ENCODE measurements at regions of chr16 and their contacts with region 1.

Region 1: DNA sequence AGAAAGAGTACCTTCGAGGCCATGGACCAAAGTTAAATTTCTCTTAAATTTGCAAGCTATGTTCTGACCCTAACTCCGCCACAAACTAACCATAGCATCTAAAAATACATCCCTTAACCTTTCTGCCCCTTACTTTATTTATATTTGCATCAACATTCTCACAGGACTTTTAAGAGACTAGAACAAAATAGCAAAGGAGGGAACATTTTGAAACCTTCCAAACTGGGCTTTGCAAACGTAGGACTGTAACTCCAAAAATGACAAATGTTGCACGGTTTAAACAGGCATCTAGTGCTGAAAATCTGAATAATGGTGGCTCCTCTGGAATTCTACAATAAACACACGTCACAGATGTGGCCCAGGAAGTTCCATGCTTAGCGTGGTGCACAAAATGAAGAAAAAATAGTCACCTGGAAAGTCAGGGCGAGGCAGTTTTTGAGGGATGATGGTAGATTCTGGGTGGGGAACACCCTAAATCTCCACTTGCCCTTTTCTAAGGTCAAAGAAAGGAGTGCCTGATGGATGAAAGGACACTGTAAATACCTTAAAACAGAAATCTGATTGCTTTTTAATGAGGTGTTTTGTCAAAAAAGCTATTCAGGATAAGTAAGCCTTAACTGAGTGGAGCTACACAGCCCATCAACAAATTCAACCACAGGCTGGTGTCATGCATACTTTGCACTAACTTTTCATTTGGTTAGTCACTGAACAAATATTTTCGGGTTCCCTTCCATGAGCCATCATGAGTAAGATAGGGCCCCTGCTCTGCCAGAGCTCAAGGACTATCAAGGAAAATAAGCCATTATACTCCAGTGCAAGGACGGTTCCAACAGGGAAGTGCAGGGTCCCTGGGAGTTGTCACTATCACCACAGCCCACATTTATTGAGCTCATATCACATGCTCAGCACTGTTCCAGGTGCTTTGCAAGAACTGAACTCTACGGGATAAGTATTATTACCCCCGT is 21.2 kb downstream of the ARHGAP17 start:
- DNase-seq: no peak
- ATAC-seq: no peak
- H3K4me3 Mint-ChIP-seq: peak overlapping the region; percentile 36
- H3K27ac Mint-ChIP-seq: peak overlapping the region; percentile 81
- H3K4me1 Mint-ChIP-seq: peaks cover 97% of the 10 kb centered on the region
- H3K27me3 Mint-ChIP-seq: no peaks in the 10 kb centered on the region
- CTCF ChIP-seq: no peak

Region 2: GRCh38 chr16:25006469-25007055 is 12.6 kb after region 1 on chr16:
- CTCF ChIA-PET with region 1: no interaction called
- POLR2A ChIA-PET with region 1: interaction called, 7 read pairs
- intact Hi-C with region 1: loop called (anchors 1 kb)
- DNase-seq: no peak
- ATAC-seq: peak; percentile 63
- H3K4me3 Mint-ChIP-seq: peak overlapping the region; percentile 47
- H3K27ac Mint-ChIP-seq: peak overlapping the region; percentile 65
- H3K4me1 Mint-ChIP-seq: peaks cover 88% of the 10 kb centered on the region
- H3K27me3 Mint-ChIP-seq: no peaks in the 10 kb centered on the region
- CTCF ChIP-seq: no peak

Region 3: GRCh38 chr16:25100511-25100910 is 106.5 kb after region 1 on chr16:
- CTCF ChIA-PET with region 1: no interaction called
- POLR2A ChIA-PET with region 1: no interaction called
- intact Hi-C with region 1: no loop called
- DNase-seq: no peak
- ATAC-seq: no peak
- H3K4me3 Mint-ChIP-seq: no peak overlapping the region
- H3K27ac Mint-ChIP-seq: no peak overlapping the region
- H3K4me1 Mint-ChIP-seq: no peaks in the 10 kb centered on the region
- H3K27me3 Mint-ChIP-seq: no peaks in the 10 kb centered on the region
- CTCF ChIP-seq: no peak